Left ventricle myocardium inferior (tissue), 1 donor: ENCODE measurements at regions of chrX and their contacts with region 1.

Region 1: GRCh38 chrX:118644378-118644777 is 83.0 kb upstream of the IL13RA1 start:
- DNase-seq: no peak
- H3K4me3 ChIP-seq: no peak overlapping the region
- H3K27ac ChIP-seq: no peak overlapping the region
- H3K4me1 ChIP-seq: no peaks in the 10 kb centered on the region
- H3K27me3 ChIP-seq: no peaks in the 10 kb centered on the region
- CTCF ChIP-seq: peak; percentile 55

Region 2: DNA sequence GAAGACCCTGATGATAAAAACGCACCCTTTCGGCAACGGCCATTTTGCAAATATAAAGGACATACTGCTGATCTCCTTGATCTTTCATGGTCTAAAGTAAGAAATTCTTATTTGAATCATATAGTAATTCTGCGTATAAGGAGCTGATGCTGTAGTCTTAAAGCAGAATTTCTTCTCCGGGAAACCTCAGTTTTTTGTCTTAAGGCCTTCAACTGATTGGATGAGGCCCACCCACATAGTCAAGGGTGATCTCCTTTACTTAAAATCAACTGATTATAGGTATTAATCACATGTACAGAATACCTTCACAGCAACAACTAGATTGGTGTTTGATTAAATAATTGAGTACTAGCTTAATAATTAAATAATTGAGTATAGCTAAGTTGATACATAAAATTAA is 211.6 kb before region 1 on chrX:
- intact Hi-C with region 1: no loop called
- DNase-seq: no peak
- H3K4me3 ChIP-seq: no peak overlapping the region
- H3K27ac ChIP-seq: no peak overlapping the region
- H3K4me1 ChIP-seq: no peaks in the 10 kb centered on the region
- H3K27me3 ChIP-seq: no peaks in the 10 kb centered on the region
- CTCF ChIP-seq: no peak

Region 3: DNA sequence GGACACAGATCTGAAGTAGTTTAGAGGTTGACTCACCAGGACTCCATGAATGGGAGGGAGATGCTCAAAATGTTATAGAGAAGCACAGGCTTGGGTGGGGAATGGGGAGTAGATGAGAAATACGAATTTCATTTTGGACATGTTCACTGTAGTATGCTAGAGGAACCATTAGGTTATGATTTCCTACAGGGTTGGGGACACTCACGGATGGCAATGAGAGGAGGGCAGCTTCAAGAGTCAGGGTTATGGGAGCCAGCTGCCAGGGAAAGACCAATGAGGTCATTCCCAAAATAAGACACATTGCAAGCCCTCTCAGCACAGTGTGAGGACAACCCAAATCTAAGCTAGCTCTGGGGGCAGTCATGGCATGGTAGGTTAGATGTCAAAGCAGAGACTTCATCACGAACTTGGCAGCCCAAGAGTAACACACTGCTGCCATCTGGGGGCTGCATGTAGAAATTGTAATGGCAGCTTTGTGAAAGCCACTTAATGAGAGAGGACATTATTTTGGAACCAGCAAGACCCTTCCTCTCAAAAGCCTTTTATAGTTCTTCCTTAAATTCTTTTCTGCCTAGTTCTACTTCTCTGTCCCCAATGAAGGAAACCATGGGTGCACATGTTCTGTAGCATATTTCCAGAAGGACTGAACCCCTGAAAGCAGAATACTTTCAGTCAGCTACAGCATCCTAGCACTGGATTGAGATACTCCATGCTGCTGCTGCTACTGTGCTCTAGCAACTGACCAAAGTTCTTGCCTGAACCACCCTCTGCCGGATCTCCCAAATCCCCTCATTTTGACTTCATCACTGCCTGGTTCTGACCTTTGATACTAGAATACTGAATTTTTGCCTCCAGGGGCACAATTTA is 163.0 kb after region 1 on chrX:
- intact Hi-C with region 1: loop called (anchors 5 kb)
- DNase-seq: peak; percentile 14
- H3K4me3 ChIP-seq: no peak overlapping the region
- H3K27ac ChIP-seq: no peak overlapping the region
- H3K4me1 ChIP-seq: no peaks in the 10 kb centered on the region
- H3K27me3 ChIP-seq: no peaks in the 10 kb centered on the region
- CTCF ChIP-seq: peak; percentile 70